Tibial artery (tissue), 4 donors: ENCODE measurements at regions of chr1 and their contacts with region 1.

Region 1: GRCh38 chr1:206544562-206545257 is 37.4 kb downstream of the RASSF5 start:
- DNase-seq: peak; percentile 58 to 77
- H3K4me3 ChIP-seq: no peak overlapping the region
- H3K27ac ChIP-seq: no peak overlapping the region
- H3K4me1 ChIP-seq: peaks cover 0 to 24% (median 21%) of the 10 kb centered on the region in 4 donors
- H3K27me3 ChIP-seq: no peaks in the 10 kb centered on the region
- CTCF ChIP-seq: peak; percentile 68 to 87

Region 2: DNA sequence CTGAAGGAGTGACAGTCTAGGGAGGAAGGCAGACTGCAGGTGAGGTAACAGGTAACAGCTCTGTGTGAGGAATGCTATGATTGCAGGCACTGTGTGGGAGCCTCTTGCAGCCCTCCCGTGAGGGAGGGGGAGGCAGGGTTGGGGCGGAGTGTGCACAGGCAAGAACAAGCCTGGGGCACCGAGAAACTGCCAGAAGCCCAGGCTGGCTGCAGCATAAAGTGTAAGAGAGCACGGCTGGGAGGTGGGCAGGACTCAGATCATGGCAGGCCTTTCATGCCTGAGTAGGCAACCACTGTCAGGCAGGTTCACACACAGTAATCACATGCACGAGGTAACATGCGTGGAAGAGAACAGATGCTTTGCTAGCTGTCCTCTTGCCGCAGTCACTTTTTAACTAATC is 503.1 kb before region 1 on chr1:
- intact Hi-C with region 1: no loop called
- DNase-seq: no peak
- H3K4me3 ChIP-seq: no peak overlapping the region
- H3K27ac ChIP-seq: no peak overlapping the region
- H3K4me1 ChIP-seq: no peaks in the 10 kb centered on the region
- H3K27me3 ChIP-seq: peaks cover 0 to 25% of the 10 kb centered on the region in 2 donors
- CTCF ChIP-seq: no peak

Region 3: GRCh38 chr1:206583707-206584648 is 39.3 kb after region 1 on chr1:
- intact Hi-C with region 1: loop called (anchors 5 kb)
- DNase-seq: peak; percentile 74 to 83
- H3K4me3 ChIP-seq: no peak overlapping the region
- H3K27ac ChIP-seq: no peak overlapping the region
- H3K4me1 ChIP-seq: peaks cover 0 to 12% (median 5%) of the 10 kb centered on the region in 4 donors
- H3K27me3 ChIP-seq: no peaks in the 10 kb centered on the region
- CTCF ChIP-seq: peak; percentile 90 to 91

Region 4: GRCh38 chr1:206865013-206865671 is 320.4 kb after region 1 on chr1 and contains the start of gene IL20:
- intact Hi-C with region 1: no loop called
- DNase-seq: peak; percentile 59 to 73
- H3K4me3 ChIP-seq: no peak within 1 kb of the TSS
- H3K27ac ChIP-seq: no peak within 1 kb of the TSS
- H3K4me1 ChIP-seq: no peaks in the 10 kb centered on the region
- H3K27me3 ChIP-seq: peaks cover 0 to 5% of the 10 kb centered on the region in 2 donors
- CTCF ChIP-seq: peak; percentile 33 to 43